ENCODE measurements at regions of chr6 and their contacts with region 1.

Region 1: DNA sequence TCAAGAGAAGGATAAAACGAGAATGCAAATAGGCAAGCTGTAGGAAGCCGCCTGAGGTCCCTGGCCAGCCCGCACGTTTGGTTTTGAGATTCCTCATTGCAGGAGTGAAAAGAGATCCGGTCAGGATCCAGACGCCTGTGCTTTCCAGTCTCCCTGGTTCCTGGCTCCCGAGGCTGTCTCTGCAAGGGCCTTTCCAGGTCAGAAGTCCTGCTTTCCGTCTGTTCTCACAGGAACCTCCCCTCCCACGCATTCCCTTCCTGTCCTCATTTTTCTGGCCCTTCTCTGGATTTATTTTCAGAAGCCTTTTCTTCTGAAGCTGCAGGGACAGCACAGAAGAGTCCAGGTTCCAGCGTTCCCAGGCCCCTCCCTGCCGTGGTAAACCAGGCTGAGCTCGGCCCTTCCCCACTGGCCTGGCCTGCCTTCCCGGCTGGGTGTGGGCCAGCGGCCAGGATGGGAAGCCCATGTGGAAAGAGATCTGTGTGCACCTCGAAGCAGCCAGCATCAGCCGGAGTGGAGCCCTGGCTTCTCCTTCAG is 54.0 kb downstream of the TMEM242 start:
- DNase-seq: peak in 1 of 2 donors; percentile 63
- H3K4me3 ChIP-seq: peak overlapping the region in 1 of 3 donors; percentile 34
- H3K27ac ChIP-seq: peak overlapping the region; percentile 75 to 83
- H3K4me1 ChIP-seq: no peaks in the 10 kb centered on the region
- H3K27me3 ChIP-seq: no peaks in the 10 kb centered on the region
- CTCF ChIP-seq: no peak
- POLR2A ChIP-seq: no peak

Region 2: GRCh38 chr6:156131221-156131903 is 1138.0 kb before region 1 on chr6:
- intact Hi-C with region 1: loop called (anchors 5 kb)
- DNase-seq: no peak
- H3K4me3 ChIP-seq: no peak overlapping the region
- H3K27ac ChIP-seq: no peak overlapping the region
- H3K4me1 ChIP-seq: no peaks in the 10 kb centered on the region
- H3K27me3 ChIP-seq: no peaks in the 10 kb centered on the region
- CTCF ChIP-seq: no peak
- POLR2A ChIP-seq: no peak

Region 3: GRCh38 chr6:157314705-157315321 is 45.5 kb after region 1 on chr6:
- intact Hi-C with region 1: no loop called
- DNase-seq: no peak
- H3K4me3 ChIP-seq: no peak overlapping the region
- H3K27ac ChIP-seq: peak overlapping the region in 1 of 2 donors; percentile 0
- H3K4me1 ChIP-seq: peaks cover 0 to 8% of the 10 kb centered on the region in 2 donors
- H3K27me3 ChIP-seq: no peaks in the 10 kb centered on the region
- CTCF ChIP-seq: peak; percentile 77 to 90 (median 87)
- POLR2A ChIP-seq: no peak

Region 4: GRCh38 chr6:158072083-158072721 is 802.9 kb after region 1 on chr6:
- intact Hi-C with region 1: no loop called
- DNase-seq: peak in 1 of 2 donors; percentile 70
- H3K4me3 ChIP-seq: no peak overlapping the region
- H3K27ac ChIP-seq: no peak overlapping the region
- H3K4me1 ChIP-seq: no peaks in the 10 kb centered on the region
- H3K27me3 ChIP-seq: no peaks in the 10 kb centered on the region
- CTCF ChIP-seq: peak; percentile 55 to 84 (median 78)
- POLR2A ChIP-seq: no peak